ENCODE measurements at regions of chr17 and their contacts with region 1.

Region 1: DNA sequence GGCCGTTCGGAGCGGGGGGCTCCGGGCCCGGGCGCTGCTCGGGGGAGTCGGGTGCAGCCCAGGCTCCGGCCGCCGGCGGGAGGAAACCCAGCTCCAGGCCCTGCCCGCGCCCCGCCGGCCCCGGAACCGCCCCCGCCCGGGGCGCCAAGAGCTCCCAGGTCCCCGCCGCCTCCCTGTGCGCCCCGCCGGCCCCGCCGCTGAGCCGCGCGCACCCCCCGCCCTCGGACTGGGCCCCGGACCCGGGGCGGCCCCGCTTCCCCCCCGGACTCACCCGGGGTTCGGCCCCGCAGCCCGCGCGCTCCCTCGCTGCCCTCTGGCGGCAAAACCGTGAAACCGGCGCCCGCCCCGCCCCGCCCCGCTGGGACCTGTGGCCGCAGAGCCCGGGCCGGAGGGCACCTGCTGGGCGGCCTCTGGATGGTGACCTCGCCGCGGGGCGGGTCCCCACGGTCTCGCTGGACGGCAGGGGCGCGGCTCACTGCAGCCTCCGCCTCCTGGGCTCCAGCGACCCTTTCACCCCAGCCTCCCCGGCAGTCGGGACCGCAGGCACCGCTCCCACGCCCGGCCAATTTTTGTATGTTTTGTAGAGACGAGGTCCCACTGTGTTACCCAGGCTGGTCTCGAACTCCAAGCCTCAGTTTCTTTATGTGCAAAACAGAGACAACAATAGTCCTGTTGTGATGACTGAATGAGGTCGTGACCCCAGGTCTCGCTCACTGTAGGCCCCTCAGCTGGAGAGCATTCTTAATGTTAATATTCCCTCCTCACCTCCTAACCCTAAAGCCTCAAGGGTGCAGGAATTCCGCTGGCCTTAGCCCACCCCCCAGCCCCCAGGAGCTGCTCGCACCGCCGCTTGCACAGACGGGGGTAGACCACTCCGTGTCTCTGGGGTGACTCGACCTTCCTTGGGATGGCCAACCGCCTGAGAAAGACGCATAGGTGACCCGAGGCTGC is 33.6 kb upstream of the RPH3AL start:
- DNase-seq: peak; percentile 82
- ATAC-seq: peak; percentile 63
- H3K4me3 Mint-ChIP-seq: peak overlapping the region; percentile 70
- H3K27ac Mint-ChIP-seq: no peak overlapping the region
- H3K4me1 Mint-ChIP-seq: peaks cover 7% of the 10 kb centered on the region
- H3K27me3 Mint-ChIP-seq: peaks cover 15% of the 10 kb centered on the region

Region 2: GRCh38 chr17:143782-144281 is 242.4 kb before region 1 on chr17:
- CTCF ChIA-PET with region 1: no interaction called
- POLR2A ChIA-PET with region 1: no interaction called
- intact Hi-C with region 1: loop called in 1 of 2 experiments (anchors 2 kb)
- DNase-seq: peak; percentile 93
- ATAC-seq: peak; percentile 87
- H3K4me3 Mint-ChIP-seq: no peak overlapping the region
- H3K27ac Mint-ChIP-seq: no peak overlapping the region
- H3K4me1 Mint-ChIP-seq: no peaks in the 10 kb centered on the region
- H3K27me3 Mint-ChIP-seq: no peaks in the 10 kb centered on the region

Measured in activated CD4-positive, alpha-beta T cell treated with anti-CD3 and anti-CD28 coated beads for 36 hours (primary cell).